Activated CD8-positive, alpha-beta T cell treated with anti-CD3 and anti-CD28 coated beads for 36 hours (primary cell): ENCODE measurements at regions of chr22 and their contacts with region 1.

Region 1: DNA sequence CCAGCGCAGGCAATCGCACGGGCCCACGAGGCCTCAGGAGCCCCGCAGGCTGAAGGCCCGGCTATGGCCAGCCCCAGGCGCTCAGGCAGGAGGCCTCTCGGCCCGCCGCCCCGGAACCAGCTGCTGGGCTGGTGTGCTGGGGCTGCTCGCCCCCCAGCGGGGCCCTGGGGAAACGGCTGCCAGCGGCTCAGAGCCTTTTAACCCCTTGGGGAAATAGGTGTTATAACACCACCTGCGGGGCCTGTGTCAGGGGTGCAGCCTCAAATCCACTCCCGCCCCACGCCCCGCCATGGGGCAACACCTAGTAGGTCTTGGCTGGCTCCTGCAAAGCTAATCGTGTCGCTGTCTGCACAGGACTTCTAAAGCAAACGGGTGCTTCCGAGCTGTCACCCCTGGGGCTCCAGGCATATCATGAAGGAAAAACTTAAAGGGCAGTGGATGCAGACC is 237.4 kb downstream of the TTC28 start:
- DNase-seq: peak; percentile 87
- ATAC-seq: peak; percentile 94
- H3K4me3 Mint-ChIP-seq: peak overlapping the region; percentile 77
- H3K27ac Mint-ChIP-seq: peak overlapping the region; percentile 76
- H3K4me1 Mint-ChIP-seq: peaks cover 25% of the 10 kb centered on the region
- H3K27me3 Mint-ChIP-seq: peaks cover 8% of the 10 kb centered on the region
- CTCF ChIP-seq: peak; percentile 83

Region 2: DNA sequence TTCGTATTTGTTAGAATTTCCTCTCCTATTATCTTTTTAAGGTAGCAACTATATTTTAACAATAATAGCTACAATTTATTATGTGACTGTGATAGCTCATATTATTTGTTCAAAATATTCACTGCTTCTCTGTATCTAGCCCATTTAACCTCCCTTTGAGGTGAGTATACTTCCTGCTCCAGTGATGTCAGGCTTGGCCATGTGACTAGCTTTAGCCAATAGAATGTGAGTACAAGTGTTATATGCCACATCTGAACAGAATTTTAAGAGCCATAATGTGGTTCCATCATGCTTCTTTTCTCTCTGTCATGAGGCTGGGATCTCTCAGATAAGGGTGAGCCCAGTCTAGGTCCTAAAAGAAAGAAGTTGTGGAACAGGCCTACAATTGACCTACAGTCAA is 19.8 kb after region 1 on chr22:
- CTCF ChIA-PET with region 1: interaction called, 11 read pairs
- POLR2A ChIA-PET with region 1: no interaction called
- intact Hi-C with region 1: no loop called
- DNase-seq: no peak
- ATAC-seq: peak; percentile 45
- H3K4me3 Mint-ChIP-seq: no peak overlapping the region
- H3K27ac Mint-ChIP-seq: no peak overlapping the region
- H3K4me1 Mint-ChIP-seq: no peaks in the 10 kb centered on the region
- H3K27me3 Mint-ChIP-seq: peaks cover 3% of the 10 kb centered on the region
- CTCF ChIP-seq: no peak